Left colon (tissue), 2 donors: ENCODE measurements at regions of chr12 and their contacts with region 1.

Region 1: GRCh38 chr12:116236148-116236731 is 41.3 kb downstream of the MED13L start:
- DNase-seq: peak in 1 of 2 donors; percentile 37
- ATAC-seq: peak; percentile 81

Region 2: DNA sequence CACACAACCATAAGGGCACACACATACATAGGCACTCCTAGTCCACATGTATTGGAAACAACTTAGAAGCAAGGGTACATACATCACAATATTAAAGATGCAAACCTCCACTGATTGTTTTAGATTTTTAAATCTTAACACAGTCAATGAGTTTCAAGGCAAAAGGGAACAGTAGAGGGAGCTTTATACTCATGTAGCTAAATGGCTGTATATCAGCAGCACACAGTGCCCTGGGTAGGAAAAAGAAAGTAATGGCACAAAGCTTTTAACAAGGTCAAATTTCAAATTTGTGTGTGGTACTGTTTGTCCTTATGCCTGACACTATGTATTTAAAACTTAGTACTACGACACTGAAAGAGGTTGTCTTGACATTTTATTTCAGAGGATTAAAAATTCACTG is 220.7 kb before region 1 on chr12:
- intact Hi-C with region 1: loop called in 1 of 2 experiments (anchors 10 kb)
- DNase-seq: no peak
- ATAC-seq: peak; percentile 82

Region 3: DNA sequence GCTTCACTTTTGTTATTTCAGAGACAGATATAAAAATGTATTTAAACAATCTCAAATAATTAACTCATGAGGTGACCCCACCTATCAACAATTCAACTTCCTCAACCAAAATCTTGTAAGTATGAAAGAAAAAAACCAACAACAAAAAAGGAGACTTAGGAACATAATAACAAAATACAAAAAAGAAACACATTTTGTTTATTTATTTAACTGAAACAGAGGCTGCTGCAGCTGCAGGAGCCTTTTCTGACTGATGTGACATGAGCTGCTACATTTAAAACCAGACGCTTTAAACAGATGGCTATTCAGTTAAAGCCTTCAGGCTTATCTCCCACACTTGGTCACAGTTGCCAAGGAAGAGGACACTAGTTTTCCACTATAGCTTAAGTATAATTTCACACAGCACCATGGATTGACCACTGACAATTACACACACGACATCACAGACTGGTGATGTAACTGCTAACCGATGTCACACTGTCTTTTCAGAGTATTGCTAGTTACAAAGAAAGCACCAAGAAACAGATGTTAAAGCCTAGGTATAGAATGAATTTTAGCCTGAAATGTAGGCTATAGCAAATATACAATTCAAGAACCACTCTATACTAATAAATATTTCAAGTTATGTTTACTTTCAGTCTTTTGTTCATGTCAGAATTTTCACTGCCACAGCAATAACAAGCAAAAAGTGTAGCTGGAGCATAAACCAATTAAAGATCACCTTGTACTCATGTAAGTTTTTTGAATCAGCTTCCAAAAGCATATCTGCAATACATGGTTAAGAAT is 71.8 kb before region 1 on chr12:
- intact Hi-C with region 1: no loop called
- DNase-seq: no peak
- ATAC-seq: peak; percentile 50